GM12878 (cell line): ENCODE measurements at regions of chr5 and their contacts with region 1.

Region 1: GRCh38 chr5:6804766-6805501 is 91.7 kb downstream of the TENT4A start:
- DNase-seq: no peak
- ATAC-seq: no peak
- H3K4me3 ChIP-seq: no peak overlapping the region
- H3K27ac ChIP-seq: no peak overlapping the region
- H3K4me1 ChIP-seq: no peaks in the 10 kb centered on the region
- H3K27me3 ChIP-seq: no peaks in the 10 kb centered on the region; a peak in 1 of 4 replicates
- CTCF ChIP-seq: no peak
- EP300 ChIP-seq: no peak
- POLR2A ChIP-seq: no peak
- RAD21 ChIP-seq: no peak

Region 2: GRCh38 chr5:6701494-6701893 is 103.4 kb before region 1 on chr5:
- CTCF ChIA-PET with region 1: no interaction called
- POLR2A ChIA-PET with region 1: interaction called, 10 read pairs
- RAD21 ChIA-PET with region 1: no interaction called
- SMC1A ChIA-PET with region 1: no interaction called
- in situ Hi-C with region 1: no loop called
- intact Hi-C with region 1: no loop called
- DNase-seq: no peak
- ATAC-seq: no peak
- H3K4me3 ChIP-seq: no peak overlapping the region
- H3K27ac ChIP-seq: no peak overlapping the region
- H3K4me1 ChIP-seq: peaks cover 10% of the 10 kb centered on the region
- H3K27me3 ChIP-seq: no peaks in the 10 kb centered on the region; a peak in 1 of 4 replicates
- CTCF ChIP-seq: no peak
- EP300 ChIP-seq: no peak
- POLR2A ChIP-seq: no peak
- RAD21 ChIP-seq: no peak

Region 3: GRCh38 chr5:6780802-6781391 is 24.0 kb before region 1 on chr5:
- CTCF ChIA-PET with region 1: no interaction called
- POLR2A ChIA-PET with region 1: no interaction called
- RAD21 ChIA-PET with region 1: no interaction called
- SMC1A ChIA-PET with region 1: no interaction called
- in situ Hi-C with region 1: no loop called
- intact Hi-C with region 1: no loop called
- DNase-seq: no peak
- ATAC-seq: peak; percentile 97
- H3K4me3 ChIP-seq: no peak overlapping the region
- H3K27ac ChIP-seq: no peak overlapping the region
- H3K4me1 ChIP-seq: no peaks in the 10 kb centered on the region
- H3K27me3 ChIP-seq: no peaks in the 10 kb centered on the region
- CTCF ChIP-seq: peak; percentile 62 to 72 (median 66)
- EP300 ChIP-seq: no peak
- POLR2A ChIP-seq: no peak
- RAD21 ChIP-seq: peak; percentile 53; the same call in 1 of the 2 replicates